ENCODE measurements at regions of chr7 and their contacts with region 1.

Region 1: DNA sequence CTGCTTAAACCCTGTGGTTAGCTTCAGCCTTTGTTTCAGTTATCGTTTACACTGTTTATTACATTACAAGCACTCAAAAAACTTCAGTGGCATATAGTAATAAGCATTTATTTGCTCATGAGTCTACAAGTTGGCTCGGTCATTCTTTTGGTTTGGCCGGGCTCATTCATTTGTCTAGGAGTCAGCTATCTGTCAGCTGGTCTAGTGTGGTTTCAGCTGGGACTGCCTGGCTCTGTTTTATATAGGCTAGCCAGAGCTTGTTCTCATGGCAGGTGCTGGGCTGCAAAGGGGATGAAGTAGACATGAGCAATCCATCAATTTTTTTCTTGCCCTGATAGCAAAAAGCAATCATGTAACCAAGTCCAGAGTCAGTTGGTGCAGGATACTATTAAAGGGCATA is 103.6 kb downstream of the MKLN1 start:
- DNase-seq: peak in 1 of 2 donors; percentile 43
- H3K4me3 ChIP-seq: no peak overlapping the region
- H3K27ac ChIP-seq: peak overlapping the region in 1 of 2 donors; percentile 43
- H3K4me1 ChIP-seq: peaks cover 0 to 7% of the 10 kb centered on the region in 2 donors
- H3K27me3 ChIP-seq: no peaks in the 10 kb centered on the region
- CTCF ChIP-seq: no peak
- POLR2A ChIP-seq: no peak

Region 2: DNA sequence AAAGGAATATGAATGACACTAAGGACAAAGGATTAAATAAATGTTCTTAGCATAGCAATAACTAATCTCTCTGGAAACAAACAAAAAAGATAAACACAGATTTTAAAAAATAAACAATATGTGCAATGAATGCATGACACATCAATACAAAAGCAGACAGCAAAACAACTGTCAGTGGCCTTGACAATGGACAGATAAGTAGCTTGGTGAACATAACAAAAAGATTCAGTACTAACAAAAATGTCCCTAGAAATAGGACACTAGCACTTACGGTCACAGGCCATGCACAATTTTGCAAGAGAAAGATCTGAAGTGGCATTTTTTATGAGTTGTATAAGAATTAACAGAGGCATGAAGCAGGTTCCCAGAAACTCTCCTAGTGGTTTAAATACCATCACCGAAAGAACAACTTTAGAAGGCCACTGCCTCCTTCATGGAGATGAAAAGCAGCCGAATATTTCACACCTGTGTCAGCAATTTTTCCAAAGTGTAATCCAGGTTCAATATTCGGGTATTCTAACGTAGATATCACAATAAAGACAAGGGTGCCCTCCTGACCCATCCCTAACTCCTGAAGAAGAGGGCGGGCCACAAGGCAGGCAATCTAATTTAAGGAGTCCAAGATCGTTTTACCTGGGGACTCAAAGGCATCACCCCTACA is 334.9 kb before region 1 on chr7:
- intact Hi-C with region 1: loop called (anchors 5 kb)
- DNase-seq: no peak
- H3K4me3 ChIP-seq: no peak overlapping the region
- H3K27ac ChIP-seq: no peak overlapping the region
- H3K4me1 ChIP-seq: peaks cover 7 to 12% of the 10 kb centered on the region in 2 donors
- H3K27me3 ChIP-seq: no peaks in the 10 kb centered on the region
- CTCF ChIP-seq: no peak
- POLR2A ChIP-seq: no peak

Region 3: GRCh38 chr7:131488361-131488760 is 57.1 kb after region 1 on chr7:
- intact Hi-C with region 1: no loop called
- DNase-seq: no peak
- H3K4me3 ChIP-seq: no peak overlapping the region
- H3K27ac ChIP-seq: no peak overlapping the region
- H3K4me1 ChIP-seq: no peaks in the 10 kb centered on the region
- H3K27me3 ChIP-seq: no peaks in the 10 kb centered on the region
- CTCF ChIP-seq: peak in 1 of 3 donors; percentile 8
- POLR2A ChIP-seq: no peak

Region 4: GRCh38 chr7:131649003-131649541 is 217.8 kb after region 1 on chr7:
- intact Hi-C with region 1: no loop called
- DNase-seq: no peak
- H3K4me3 ChIP-seq: no peak overlapping the region
- H3K27ac ChIP-seq: peak overlapping the region; percentile 64 to 87
- H3K4me1 ChIP-seq: no peaks in the 10 kb centered on the region
- H3K27me3 ChIP-seq: no peaks in the 10 kb centered on the region
- CTCF ChIP-seq: no peak
- POLR2A ChIP-seq: no peak

Measured in breast epithelium (tissue), 4 donors.